Adrenal gland (tissue), 19 donors: ENCODE measurements at regions of chr11 and their contacts with region 1.

Region 1: GRCh38 chr11:14249121-14249963 is 109.6 kb downstream of the RRAS2 start:
- DNase-seq: peak; percentile 47 to 79 (median 54)
- H3K4me3 ChIP-seq: no peak overlapping the region
- H3K27ac ChIP-seq: no peak overlapping the region
- H3K4me1 ChIP-seq: peaks cover 0 to 15% of the 10 kb centered on the region in 2 donors
- H3K27me3 ChIP-seq: no peaks in the 10 kb centered on the region
- CTCF ChIP-seq: peak; percentile 86 to 94 (median 88)
- POLR2A ChIP-seq: no peak

Region 2: GRCh38 chr11:13772223-13773046 is 476.9 kb before region 1 on chr11:
- intact Hi-C with region 1: loop called (anchors 5 kb)
- DNase-seq: peak in 5 of 7 donors; percentile 13 to 23 (median 21)
- H3K4me3 ChIP-seq: no peak overlapping the region
- H3K27ac ChIP-seq: no peak overlapping the region
- H3K4me1 ChIP-seq: no peaks in the 10 kb centered on the region
- H3K27me3 ChIP-seq: no peaks in the 10 kb centered on the region
- CTCF ChIP-seq: peak; percentile 37 to 56 (median 47)
- POLR2A ChIP-seq: no peak

Region 3: GRCh38 chr11:13955971-13956421 is 293.3 kb before region 1 on chr11:
- intact Hi-C with region 1: loop called (anchors 5 kb)
- DNase-seq: peak; percentile 53 to 85 (median 64)
- H3K4me3 ChIP-seq: no peak overlapping the region
- H3K27ac ChIP-seq: no peak overlapping the region
- H3K4me1 ChIP-seq: no peaks in the 10 kb centered on the region
- H3K27me3 ChIP-seq: peaks cover 4% of the 10 kb centered on the region
- CTCF ChIP-seq: peak; percentile 80 to 94 (median 90)
- POLR2A ChIP-seq: no peak

Region 4: GRCh38 chr11:13962562-13963168 is 286.7 kb before region 1 on chr11 and contains the start of gene SPON1:
- intact Hi-C with region 1: loop called (anchors 5 kb)
- DNase-seq: peak in 6 of 7 donors; percentile 14 to 58 (median 43)
- H3K4me3 ChIP-seq: peak within 1 kb of the TSS in 1 of 4 donors; percentile 56
- H3K27ac ChIP-seq: peak within 1 kb of the TSS in 3 of 5 donors; percentile 11 to 78 (median 74)
- H3K4me1 ChIP-seq: peaks cover 0 to 5% of the 10 kb centered on the region in 2 donors
- H3K27me3 ChIP-seq: peaks cover 30% of the 10 kb centered on the region
- CTCF ChIP-seq: no peak
- POLR2A ChIP-seq: no peak
- total RNA-seq, gene SPON1: 2.7 to 116 (median 38.5) TPM

Region 5: GRCh38 chr11:14320020-14320419 is 70.7 kb after region 1 on chr11:
- intact Hi-C with region 1: no loop called
- DNase-seq: no peak
- H3K4me3 ChIP-seq: no peak overlapping the region
- H3K27ac ChIP-seq: no peak overlapping the region
- H3K4me1 ChIP-seq: no peaks in the 10 kb centered on the region
- H3K27me3 ChIP-seq: no peaks in the 10 kb centered on the region
- CTCF ChIP-seq: no peak
- POLR2A ChIP-seq: no peak